ENCODE measurements at regions of chr3 and their contacts with region 1.

Region 1: GRCh38 chr3:128879125-128879969 is at the start of gene ACAD9:
- DNase-seq: peak; percentile 100
- H3K4me3 Mint-ChIP-seq: peak within 1 kb of the TSS; percentile 88
- H3K27ac Mint-ChIP-seq: peak within 1 kb of the TSS; percentile 94
- H3K4me1 Mint-ChIP-seq: peaks cover 59% of the 10 kb centered on the region
- H3K27me3 Mint-ChIP-seq: peaks cover 3% of the 10 kb centered on the region
- total RNA-seq, gene ACAD9: 68.5 and 69.2 TPM in 2 replicates

Region 2: GRCh38 chr3:128487813-128488635 is 391.3 kb before region 1 on chr3:
- intact Hi-C with region 1: no loop called
- DNase-seq: peak; percentile 73
- H3K4me3 Mint-ChIP-seq: peak overlapping the region; percentile 82
- H3K27ac Mint-ChIP-seq: no peak overlapping the region
- H3K4me1 Mint-ChIP-seq: peaks cover 20% of the 10 kb centered on the region
- H3K27me3 Mint-ChIP-seq: peaks cover 69% of the 10 kb centered on the region

Region 3: DNA sequence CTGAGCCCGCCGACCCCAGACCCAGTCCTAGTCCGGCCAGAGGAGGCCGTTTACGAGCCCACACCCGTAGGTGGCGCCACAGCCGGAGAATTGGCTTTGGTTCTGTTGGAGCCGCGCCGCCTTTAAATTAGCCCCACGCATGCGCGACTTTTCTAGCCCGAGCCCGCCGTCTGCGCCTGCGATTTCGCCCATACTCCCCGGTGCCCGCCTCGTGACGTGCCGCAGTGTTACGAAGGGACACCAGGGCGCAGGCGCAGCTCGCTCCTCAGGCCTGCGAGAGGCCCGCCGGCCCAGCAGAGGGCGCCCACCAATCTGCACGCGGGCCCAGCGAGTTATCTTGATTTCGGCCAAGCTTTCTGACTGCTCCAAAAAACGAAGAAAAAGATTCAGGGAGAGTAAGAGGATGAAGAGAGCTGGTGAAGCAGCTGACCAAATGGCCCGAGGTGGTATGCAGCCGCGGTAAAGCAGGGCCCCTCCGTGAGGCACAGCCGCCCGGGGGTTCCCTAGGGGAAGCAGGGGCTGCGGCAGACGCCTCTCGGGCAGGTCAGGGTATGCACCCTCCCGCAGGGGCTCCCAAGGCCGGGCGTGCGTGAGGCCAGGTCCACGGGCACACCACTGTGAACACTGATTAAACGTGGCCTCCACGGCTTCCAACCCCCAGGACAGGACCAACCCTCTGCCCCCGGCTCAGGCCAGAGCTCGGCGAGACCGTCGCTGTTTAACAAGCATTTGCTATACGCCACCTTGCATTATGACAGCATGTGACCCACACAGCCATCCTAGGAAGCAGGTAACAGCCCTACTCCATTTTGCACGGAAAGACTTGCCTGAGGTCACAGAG is 261.6 kb before region 1 on chr3:
- intact Hi-C with region 1: loop called (anchors 1 kb)
- DNase-seq: peak; percentile 100
- H3K4me3 Mint-ChIP-seq: peak overlapping the region; percentile 95
- H3K27ac Mint-ChIP-seq: peak overlapping the region; percentile 96
- H3K4me1 Mint-ChIP-seq: peaks cover 34% of the 10 kb centered on the region
- H3K27me3 Mint-ChIP-seq: no peaks in the 10 kb centered on the region

Region 4: DNA sequence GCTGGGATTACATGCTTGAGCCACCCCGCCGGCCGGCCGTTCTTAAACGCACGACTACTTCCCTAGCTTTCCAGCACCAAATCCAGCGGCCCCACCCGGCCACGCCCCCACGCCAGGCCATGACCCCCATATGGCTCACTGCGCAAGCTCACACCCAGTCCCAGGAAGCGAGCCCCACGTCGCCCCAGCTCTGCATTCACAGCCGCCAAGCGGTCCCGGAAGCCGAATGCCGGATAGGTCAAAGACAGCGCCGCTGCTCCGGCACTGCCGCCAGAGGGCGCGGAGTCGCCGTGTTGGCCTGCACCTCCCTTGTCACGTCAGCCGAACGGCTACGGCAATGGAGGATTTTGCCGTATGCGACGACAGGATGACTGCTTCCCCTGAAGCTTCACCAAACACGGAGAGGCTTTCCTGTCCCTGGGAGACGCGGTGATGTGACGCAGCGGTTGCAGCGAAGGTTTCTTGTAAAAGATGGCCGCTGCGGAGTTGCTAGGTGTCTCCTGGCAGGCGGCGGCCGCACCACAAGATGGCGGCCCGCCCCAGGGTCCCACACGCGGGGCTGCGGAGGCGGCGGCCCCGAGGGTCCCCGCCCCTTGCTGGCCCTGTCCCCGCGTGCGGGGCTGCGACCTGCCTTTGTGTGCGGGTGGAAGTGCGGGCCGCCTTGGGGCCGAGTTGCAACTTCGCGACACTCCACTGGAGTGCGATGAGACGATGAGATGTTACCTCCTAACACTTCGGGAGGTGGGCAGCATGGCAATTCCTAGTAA is 198.6 kb before region 1 on chr3:
- intact Hi-C with region 1: loop called (anchors 1 kb)
- DNase-seq: peak; percentile 99
- H3K4me3 Mint-ChIP-seq: peak overlapping the region; percentile 93
- H3K27ac Mint-ChIP-seq: peak overlapping the region; percentile 99
- H3K4me1 Mint-ChIP-seq: peaks cover 23% of the 10 kb centered on the region
- H3K27me3 Mint-ChIP-seq: no peaks in the 10 kb centered on the region

Region 5: GRCh38 chr3:128787256-128788240 is 91.8 kb before region 1 on chr3:
- intact Hi-C with region 1: loop called (anchors 1 kb)
- DNase-seq: peak; percentile 79
- H3K4me3 Mint-ChIP-seq: peak overlapping the region; percentile 89
- H3K27ac Mint-ChIP-seq: peak overlapping the region; percentile 100
- H3K4me1 Mint-ChIP-seq: peaks cover 76% of the 10 kb centered on the region
- H3K27me3 Mint-ChIP-seq: no peaks in the 10 kb centered on the region

Region 6: DNA sequence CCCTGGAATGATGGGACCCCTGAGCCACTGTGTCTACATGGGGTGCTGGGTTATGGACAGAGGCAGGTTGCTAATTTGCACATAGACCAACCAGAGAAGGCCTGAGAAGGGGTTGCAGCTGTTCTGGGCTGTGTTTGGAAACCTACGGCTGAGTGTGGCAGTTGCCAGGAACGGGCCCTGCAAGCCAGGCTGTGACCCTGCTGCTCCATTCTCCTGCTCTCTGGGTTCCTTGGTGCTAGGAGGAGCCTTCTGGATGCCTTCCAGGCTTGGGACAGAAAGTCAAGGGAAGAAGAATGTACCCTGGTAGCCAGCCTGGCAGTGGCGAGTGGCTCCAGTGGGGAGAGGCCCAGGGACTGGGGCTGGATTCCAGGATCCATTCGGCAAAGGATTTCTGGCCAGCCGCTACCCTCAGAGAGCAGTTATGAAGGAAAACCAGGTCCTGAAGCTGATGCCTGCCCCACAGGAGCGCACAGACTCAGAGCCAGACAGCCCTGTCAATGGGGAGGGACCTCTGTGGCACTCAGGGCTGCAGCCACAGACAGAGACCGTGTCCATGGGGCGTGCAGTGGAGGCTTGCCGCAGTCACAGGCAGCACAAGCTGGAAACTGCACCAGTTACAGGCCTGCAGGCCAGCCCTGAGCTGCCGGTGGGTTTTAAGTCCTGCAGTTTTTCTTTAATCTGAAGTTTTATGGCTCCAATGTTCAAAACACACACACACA is 55.1 kb before region 1 on chr3:
- intact Hi-C with region 1: no loop called
- DNase-seq: no peak
- H3K4me3 Mint-ChIP-seq: no peak overlapping the region
- H3K27ac Mint-ChIP-seq: peak overlapping the region; percentile 25
- H3K4me1 Mint-ChIP-seq: peaks cover 2% of the 10 kb centered on the region
- H3K27me3 Mint-ChIP-seq: no peaks in the 10 kb centered on the region

Region 7: DNA sequence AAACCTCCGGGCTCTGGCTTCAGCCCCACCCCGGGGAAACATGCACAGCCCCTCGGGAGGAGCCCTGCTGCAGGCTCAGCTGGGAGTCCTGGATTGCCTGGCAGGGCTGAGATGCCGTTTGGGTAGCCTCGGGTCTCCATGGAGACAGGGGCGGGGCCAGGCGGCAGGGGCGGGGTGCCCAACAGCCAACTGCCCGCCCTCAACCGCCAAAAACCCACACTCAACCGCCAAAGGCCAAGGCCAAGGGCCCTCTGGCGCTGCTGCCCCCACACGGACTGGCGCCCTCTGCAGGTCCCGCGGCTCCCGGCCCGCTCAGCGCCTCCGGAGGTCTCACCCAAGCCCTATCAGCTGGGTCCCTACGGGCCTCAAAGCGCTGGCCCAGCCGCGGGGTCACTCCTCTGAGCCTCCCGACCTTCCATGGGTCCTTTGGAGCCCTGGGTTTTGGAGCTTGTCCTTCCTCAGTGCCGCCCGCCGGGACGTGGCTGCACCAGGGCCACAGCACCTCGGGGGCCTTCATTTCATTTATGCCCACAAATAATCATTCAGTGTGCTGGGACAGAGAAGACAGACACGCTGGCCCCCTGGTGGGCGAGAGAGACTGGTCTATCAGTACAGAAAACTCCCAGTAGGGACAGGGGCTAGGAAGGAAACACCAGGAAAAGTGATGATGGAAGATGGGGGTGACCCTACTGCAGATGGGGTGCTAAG is 33.4 kb before region 1 on chr3:
- intact Hi-C with region 1: loop called (anchors 2 kb)
- DNase-seq: peak; percentile 94
- H3K4me3 Mint-ChIP-seq: peak overlapping the region; percentile 69
- H3K27ac Mint-ChIP-seq: peak overlapping the region; percentile 88
- H3K4me1 Mint-ChIP-seq: peaks cover 18% of the 10 kb centered on the region
- H3K27me3 Mint-ChIP-seq: no peaks in the 10 kb centered on the region

Region 8: GRCh38 chr3:129160891-129161859 is 281.8 kb after region 1 on chr3 and contains the start of gene ISY1:
- intact Hi-C with region 1: loop called (anchors 1 kb)
- DNase-seq: peak; percentile 96
- H3K4me3 Mint-ChIP-seq: peak within 1 kb of the TSS; percentile 98
- H3K27ac Mint-ChIP-seq: peak within 1 kb of the TSS; percentile 98
- H3K4me1 Mint-ChIP-seq: peaks cover 31% of the 10 kb centered on the region
- H3K27me3 Mint-ChIP-seq: peaks cover 3% of the 10 kb centered on the region
- total RNA-seq, gene ISY1: 73.8 and 83.7 TPM in 2 replicates

Region 9: GRCh38 chr3:129249276-129250065 is 370.1 kb after region 1 on chr3 and contains the start of gene COPG1:
- intact Hi-C with region 1: loop called (anchors 2 kb)
- DNase-seq: peak; percentile 98
- H3K4me3 Mint-ChIP-seq: peak within 1 kb of the TSS; percentile 96
- H3K27ac Mint-ChIP-seq: peak within 1 kb of the TSS; percentile 99
- H3K4me1 Mint-ChIP-seq: peaks cover 41% of the 10 kb centered on the region
- H3K27me3 Mint-ChIP-seq: no peaks in the 10 kb centered on the region
- total RNA-seq, gene COPG1: 142 and 164 TPM in 2 replicates